GM10248 (cell line): ENCODE measurements at regions of chr1 and their contacts with region 1.

Region 1: GRCh38 chr1:32063261-32063681 is 9.5 kb upstream of the TMEM39B start:
- DNase-seq: peak; percentile 43
- CTCF ChIP-seq: peak; percentile 61

Region 2: GRCh38 chr1:31984419-31985347 is 78.6 kb before region 1 on chr1:
- CTCF ChIA-PET with region 1: no interaction called
- POLR2A ChIA-PET with region 1: no interaction called
- DNase-seq: no peak
- CTCF ChIP-seq: no peak

Region 3: GRCh38 chr1:32031578-32032274 is 31.5 kb before region 1 on chr1:
- CTCF ChIA-PET with region 1: interaction called, 10 read pairs
- POLR2A ChIA-PET with region 1: interaction called, 3 read pairs
- DNase-seq: no peak
- CTCF ChIP-seq: no peak